Aorta (tissue), 5 donors: ENCODE measurements at regions of chr10 and their contacts with region 1.

Region 1: GRCh38 chr10:14878266-14879054 is at the start of gene SUV39H2:
- DNase-seq: peak; percentile 97 to 98
- ATAC-seq: peak; percentile 98
- H3K4me3 ChIP-seq: peak within 1 kb of the TSS; percentile 81 to 98
- H3K27ac ChIP-seq: peak within 1 kb of the TSS in 1 of 2 donors; percentile 60
- H3K4me1 ChIP-seq: no peaks in the 10 kb centered on the region
- H3K27me3 ChIP-seq: no peaks in the 10 kb centered on the region
- total RNA-seq, gene SUV39H2: 5.2 to 8.0 TPM

Region 2: GRCh38 chr10:14688606-14689005 is 189.9 kb before region 1 on chr10:
- intact Hi-C with region 1: no loop called
- DNase-seq: no peak
- ATAC-seq: no peak
- H3K4me3 ChIP-seq: no peak overlapping the region
- H3K27ac ChIP-seq: no peak overlapping the region
- H3K4me1 ChIP-seq: no peaks in the 10 kb centered on the region
- H3K27me3 ChIP-seq: no peaks in the 10 kb centered on the region

Region 3: GRCh38 chr10:14837757-14838581 is 40.5 kb before region 1 on chr10 and contains the starts of genes CDNF, HSPA14 and MSANTD7:
- intact Hi-C with region 1: loop called in 1 of 2 experiments (anchors 1 kb)
- DNase-seq: peak; percentile 99 to 100
- ATAC-seq: peak; percentile 99
- H3K4me3 ChIP-seq: peak within 1 kb of the TSS; percentile 81 to 93
- H3K27ac ChIP-seq: peak within 1 kb of the TSS; percentile 67 to 92
- H3K4me1 ChIP-seq: no peaks in the 10 kb centered on the region
- H3K27me3 ChIP-seq: no peaks in the 10 kb centered on the region
- total RNA-seq, gene CDNF: 1.9 TPM
- total RNA-seq, gene HSPA14: 11.5 TPM
- total RNA-seq, gene MSANTD7: 7.0 to 8.2 TPM

Region 4: DNA sequence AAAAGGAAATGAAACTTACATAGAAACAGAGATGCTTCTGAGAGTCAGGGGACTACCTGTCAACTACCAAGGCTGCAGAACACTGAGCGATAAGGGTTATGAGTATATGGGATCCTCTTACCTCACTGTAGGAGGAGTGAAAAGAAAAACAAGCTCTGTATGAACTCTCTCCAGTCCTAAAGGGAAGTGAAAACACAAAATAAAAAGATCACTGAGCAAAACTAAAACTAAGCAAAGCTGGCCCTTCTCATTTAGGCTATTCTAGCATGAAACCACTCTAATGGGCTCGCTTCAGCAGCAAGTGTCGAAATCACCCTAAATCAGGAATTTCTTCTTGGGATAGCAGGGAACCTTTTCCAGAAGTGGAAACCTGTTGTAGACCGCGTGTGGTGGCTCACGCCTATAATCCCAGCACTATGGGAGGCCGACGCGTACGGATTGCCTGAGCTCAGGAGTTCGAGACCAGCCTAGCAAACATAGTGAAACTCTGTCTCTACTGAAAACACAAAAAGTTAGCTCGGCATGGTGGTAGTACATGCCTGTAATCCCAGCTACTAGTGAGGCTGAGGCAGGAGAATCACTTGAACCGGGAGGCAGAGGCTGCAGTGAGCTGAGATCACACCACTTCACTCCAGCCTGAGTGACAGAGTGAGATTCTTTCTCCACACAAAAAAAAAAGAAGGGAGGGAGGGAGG is 48.4 kb after region 1 on chr10:
- intact Hi-C with region 1: no loop called
- DNase-seq: no peak
- ATAC-seq: no peak
- H3K4me3 ChIP-seq: no peak overlapping the region
- H3K27ac ChIP-seq: no peak overlapping the region
- H3K4me1 ChIP-seq: no peaks in the 10 kb centered on the region
- H3K27me3 ChIP-seq: no peaks in the 10 kb centered on the region

Region 5: DNA sequence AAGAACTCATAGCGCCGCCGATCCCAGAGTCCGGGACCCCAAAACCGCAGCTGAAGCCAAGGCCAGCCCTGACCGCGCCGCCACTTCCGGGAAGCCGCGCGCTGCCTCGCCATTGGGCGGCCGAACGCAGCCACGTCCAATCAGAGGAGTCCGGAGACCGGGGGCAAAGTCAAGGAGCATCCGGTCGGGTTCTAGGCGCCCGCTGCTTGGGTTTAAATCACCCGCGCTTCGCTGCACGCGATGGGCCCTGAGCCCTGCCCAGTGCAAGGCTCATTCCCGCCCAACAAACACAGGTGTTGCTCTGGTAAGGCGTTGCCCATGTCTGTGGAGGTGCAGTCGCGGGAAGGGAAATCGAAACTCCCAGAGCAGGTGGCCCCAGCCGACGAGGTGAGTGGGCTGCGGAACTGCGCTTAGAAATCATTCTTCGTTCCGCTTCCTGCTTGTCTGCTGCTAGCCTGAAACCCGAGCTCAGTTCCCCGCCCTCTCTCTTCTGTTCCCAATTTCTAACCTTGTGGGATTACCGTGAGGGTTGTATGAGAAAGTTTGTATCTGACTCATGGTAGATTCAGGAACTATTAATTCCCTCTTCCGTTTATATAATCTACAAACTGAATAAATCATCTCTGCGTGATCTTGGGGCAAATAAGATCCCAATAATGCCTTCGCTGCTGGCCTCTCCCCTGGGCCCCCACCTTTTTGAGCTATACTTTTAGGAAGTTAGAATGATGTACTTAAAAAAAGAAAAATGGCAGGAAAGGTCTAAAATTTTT is 75.7 kb after region 1 on chr10 and contains the start of gene DCLRE1C:
- intact Hi-C with region 1: loop called in 1 of 2 experiments (anchors 1 kb)
- DNase-seq: peak; percentile 94 to 96
- ATAC-seq: peak; percentile 98
- H3K4me3 ChIP-seq: peak within 1 kb of the TSS; percentile 64 to 69
- H3K27ac ChIP-seq: peak within 1 kb of the TSS in 1 of 2 donors; percentile 89
- H3K4me1 ChIP-seq: peaks cover 2 to 3% of the 10 kb centered on the region in 2 donors
- H3K27me3 ChIP-seq: no peaks in the 10 kb centered on the region
- total RNA-seq, gene DCLRE1C: 9.3 to 16.6 TPM

Region 6: GRCh38 chr10:14971867-14972448 is 93.5 kb after region 1 on chr10:
- intact Hi-C with region 1: no loop called
- DNase-seq: no peak
- ATAC-seq: no peak
- H3K4me3 ChIP-seq: no peak overlapping the region
- H3K27ac ChIP-seq: no peak overlapping the region
- H3K4me1 ChIP-seq: no peaks in the 10 kb centered on the region
- H3K27me3 ChIP-seq: no peaks in the 10 kb centered on the region

Region 7: DNA sequence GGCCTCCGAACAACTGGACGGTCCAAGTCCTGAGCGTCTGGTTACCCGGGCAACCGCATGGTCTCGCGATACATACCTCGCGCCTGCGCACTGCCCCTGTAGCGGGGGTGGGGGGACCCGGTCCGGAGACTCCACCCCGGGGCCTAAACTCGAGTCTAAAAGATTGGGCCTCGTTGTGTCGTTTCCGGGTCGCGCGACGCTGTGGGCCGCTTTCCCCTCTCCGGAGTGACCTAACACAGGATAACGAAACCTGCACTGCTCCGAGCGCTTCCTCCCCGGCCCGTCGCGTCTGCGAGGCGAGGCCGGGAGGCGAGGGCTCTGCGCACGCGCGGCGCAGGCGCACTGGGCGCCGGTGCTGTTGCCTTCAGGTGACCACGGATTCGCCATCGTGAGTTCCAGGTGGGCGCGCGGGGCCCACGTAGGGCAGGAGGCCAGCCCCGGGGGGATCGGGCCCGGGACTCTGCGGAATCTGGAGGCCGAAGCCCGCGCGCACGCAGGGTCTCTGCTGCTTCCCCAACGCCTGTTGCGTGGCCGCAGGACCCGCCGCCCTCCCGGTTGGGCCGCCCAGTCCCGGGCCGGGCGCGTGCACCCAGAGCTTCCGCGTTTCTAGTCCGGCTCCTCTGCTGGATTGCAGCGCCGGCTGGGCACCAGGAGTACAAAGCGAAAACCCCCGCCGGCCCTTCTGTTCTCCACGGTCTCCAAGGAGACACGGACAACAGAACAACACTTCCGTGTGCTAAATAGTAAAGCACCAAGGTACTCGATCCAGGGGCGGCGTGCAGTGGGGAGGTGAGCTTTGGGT is 218.8 kb after region 1 on chr10 and contains the start of gene RPP38:
- intact Hi-C with region 1: loop called in 1 of 2 experiments (anchors 10 kb)
- DNase-seq: peak; percentile 98 to 99
- ATAC-seq: peak; percentile 99
- H3K4me3 ChIP-seq: peak within 1 kb of the TSS; percentile 38 to 75
- H3K27ac ChIP-seq: peak within 1 kb of the TSS in 1 of 2 donors; percentile 60
- H3K4me1 ChIP-seq: no peaks in the 10 kb centered on the region
- H3K27me3 ChIP-seq: no peaks in the 10 kb centered on the region
- total RNA-seq, gene RPP38: 8.2 to 9.0 TPM